ENCODE measurements at regions of chr15 and their contacts with region 1.

Region 1: GRCh38 chr15:73081321-73081958 is 29.2 kb downstream of the NEO1 start:
- DNase-seq: no peak
- H3K4me3 ChIP-seq: no peak overlapping the region
- H3K27ac ChIP-seq: no peak overlapping the region
- H3K4me1 ChIP-seq: peaks cover 8 to 48% (median 47%) of the 10 kb centered on the region in 4 donors
- H3K27me3 ChIP-seq: no peaks in the 10 kb centered on the region
- CTCF ChIP-seq: peak; percentile 61 to 84 (median 74)
- EP300 ChIP-seq: no peak
- POLR2A ChIP-seq: no peak

Region 2: DNA sequence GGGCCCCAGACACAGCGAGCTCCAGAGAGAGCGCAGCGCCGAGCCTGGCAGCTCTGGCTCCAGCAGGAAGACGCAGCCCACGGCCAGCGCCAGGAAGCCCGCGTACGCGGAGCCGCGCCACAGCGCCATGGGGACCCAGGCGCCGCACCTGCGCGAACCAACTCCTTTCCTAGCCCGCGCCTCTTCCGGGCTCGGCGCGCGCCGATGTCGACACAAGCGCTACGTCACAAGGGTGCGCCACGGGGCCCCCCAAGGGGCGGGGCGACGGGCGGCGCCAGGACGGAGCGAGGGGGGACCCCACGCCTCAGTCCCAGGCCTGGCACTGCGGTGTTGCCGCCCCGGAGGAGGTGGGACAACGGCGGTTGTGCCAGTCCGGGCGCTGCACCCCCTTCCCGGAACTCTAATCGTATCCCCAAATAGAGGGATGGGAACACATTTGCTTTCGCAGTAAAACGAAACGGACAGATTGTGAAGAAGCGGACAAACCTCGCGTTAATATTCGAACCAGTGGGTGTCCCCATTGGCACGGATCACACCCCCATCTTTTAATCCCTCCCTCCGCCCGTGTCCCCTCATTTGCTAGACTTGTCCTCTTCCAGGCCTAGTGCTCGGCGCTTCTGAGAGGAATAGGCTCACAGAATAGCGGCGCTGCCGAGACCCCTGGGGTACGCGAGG is 297.7 kb before region 1 on chr15 and contains the start of gene ADPGK:
- intact Hi-C with region 1: loop called (anchors 5 kb)
- DNase-seq: peak; percentile 97
- H3K4me3 ChIP-seq: peak within 1 kb of the TSS; percentile 89 to 100 (median 100)
- H3K27ac ChIP-seq: peak within 1 kb of the TSS; percentile 89 to 97 (median 94)
- H3K4me1 ChIP-seq: peaks cover 23 to 63% (median 43%) of the 10 kb centered on the region in 4 donors
- H3K27me3 ChIP-seq: peaks cover 0 to 4% (median 0%) of the 10 kb centered on the region in 4 donors
- CTCF ChIP-seq: peak in 1 of 3 experiments; percentile 31
- EP300 ChIP-seq: no peak
- POLR2A ChIP-seq: peak; percentile 68
- total RNA-seq, gene ADPGK: 20.2 to 37.4 (median 22.3) TPM

Region 3: DNA sequence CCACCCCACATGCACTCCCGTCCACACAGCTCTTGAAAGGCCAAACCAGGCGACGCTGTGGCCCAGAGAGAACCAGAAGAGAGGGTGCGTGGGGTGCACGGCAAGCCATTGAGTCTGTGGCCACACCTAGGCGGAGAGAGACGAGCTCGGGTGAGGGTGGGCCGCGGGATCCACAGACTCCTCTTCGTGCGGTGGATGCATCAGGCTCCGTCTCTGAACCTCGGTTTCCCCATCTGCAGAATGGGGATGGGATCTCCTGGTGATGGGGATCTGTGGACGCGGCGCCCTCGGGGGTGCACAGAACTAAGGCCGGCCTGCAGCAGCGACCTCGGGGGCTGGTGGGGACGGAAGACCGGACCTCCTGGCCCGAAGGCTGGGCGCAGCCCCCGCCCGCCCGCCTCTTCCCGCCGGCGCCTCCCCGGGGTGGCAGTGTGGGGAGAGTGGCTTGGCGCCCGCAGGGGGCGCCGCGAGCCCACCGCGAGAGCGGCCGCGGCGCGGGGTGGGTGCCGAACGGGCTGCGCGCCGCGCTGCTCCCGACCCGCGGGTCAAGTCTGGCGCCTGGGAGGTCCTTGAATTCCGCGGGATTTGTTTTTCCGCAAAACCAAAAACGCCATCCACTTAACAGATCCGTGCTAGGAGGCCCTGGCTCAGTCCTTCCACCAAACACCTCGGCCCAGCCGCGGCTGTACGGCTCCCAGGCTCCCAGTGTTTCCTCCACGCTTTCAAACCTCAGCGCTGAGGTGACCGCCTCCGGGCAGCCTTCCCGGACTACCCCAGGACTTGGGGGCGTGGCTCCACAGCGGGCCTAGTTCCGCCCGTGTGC is 284.7 kb before region 1 on chr15:
- intact Hi-C with region 1: loop called (anchors 2 kb)
- DNase-seq: no peak
- H3K4me3 ChIP-seq: peak overlapping the region; percentile 57 to 68 (median 62)
- H3K27ac ChIP-seq: peak overlapping the region in 1 of 4 donors; percentile 53
- H3K4me1 ChIP-seq: peaks cover 9 to 17% (median 14%) of the 10 kb centered on the region in 4 donors
- H3K27me3 ChIP-seq: peaks cover 0 to 13% (median 0%) of the 10 kb centered on the region in 4 donors
- CTCF ChIP-seq: peak; percentile 64 to 84 (median 82)
- EP300 ChIP-seq: no peak
- POLR2A ChIP-seq: no peak

Region 4: GRCh38 chr15:73034221-73034620 is 47.2 kb before region 1 on chr15:
- intact Hi-C with region 1: no loop called
- DNase-seq: peak; percentile 10
- H3K4me3 ChIP-seq: no peak overlapping the region
- H3K27ac ChIP-seq: no peak overlapping the region
- H3K4me1 ChIP-seq: no peaks in the 10 kb centered on the region
- H3K27me3 ChIP-seq: peaks cover 0 to 4% (median 0%) of the 10 kb centered on the region in 4 donors
- CTCF ChIP-seq: no peak
- EP300 ChIP-seq: no peak
- POLR2A ChIP-seq: no peak

Region 5: GRCh38 chr15:73051811-73052678 is 29.4 kb before region 1 on chr15 and contains the start of gene NEO1:
- intact Hi-C with region 1: loop called (anchors 2 kb)
- DNase-seq: peak; percentile 93
- H3K4me3 ChIP-seq: peak within 1 kb of the TSS; percentile 74 to 95 (median 84)
- H3K27ac ChIP-seq: peak within 1 kb of the TSS; percentile 89 to 97 (median 95)
- H3K4me1 ChIP-seq: peaks cover 10 to 49% (median 33%) of the 10 kb centered on the region in 4 donors
- H3K27me3 ChIP-seq: no peaks in the 10 kb centered on the region
- CTCF ChIP-seq: no peak
- EP300 ChIP-seq: no peak
- POLR2A ChIP-seq: no peak
- total RNA-seq, gene NEO1: 38.2 to 61.2 (median 53.5) TPM